A673 (cell line): ENCODE measurements at regions of chr3 and their contacts with region 1.

Region 1: DNA sequence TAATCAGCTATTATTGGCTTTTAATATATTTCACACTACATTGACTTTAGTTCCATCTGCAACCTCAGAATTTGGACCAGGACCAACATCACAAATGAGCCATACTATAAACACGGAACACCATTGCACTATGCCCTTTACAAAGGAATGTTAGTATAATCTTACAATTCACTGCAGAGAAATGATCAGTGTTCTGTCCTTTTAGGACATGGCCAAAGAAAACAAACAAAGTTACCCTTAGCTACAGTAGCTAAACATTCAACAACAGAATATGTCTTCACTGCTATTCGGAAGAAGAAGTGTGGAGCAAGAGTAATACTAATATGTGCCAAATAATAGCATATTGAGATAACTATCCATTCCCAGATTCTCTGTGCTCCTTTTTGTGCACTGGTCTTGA is 90.4 kb downstream of the NAALADL2 start:
- DNase-seq: no peak
- H3K4me3 ChIP-seq: no peak overlapping the region
- H3K27ac ChIP-seq: no peak overlapping the region
- H3K4me1 ChIP-seq: no peaks in the 10 kb centered on the region
- H3K27me3 ChIP-seq: no peaks in the 10 kb centered on the region
- CTCF ChIP-seq: no peak

Region 2: DNA sequence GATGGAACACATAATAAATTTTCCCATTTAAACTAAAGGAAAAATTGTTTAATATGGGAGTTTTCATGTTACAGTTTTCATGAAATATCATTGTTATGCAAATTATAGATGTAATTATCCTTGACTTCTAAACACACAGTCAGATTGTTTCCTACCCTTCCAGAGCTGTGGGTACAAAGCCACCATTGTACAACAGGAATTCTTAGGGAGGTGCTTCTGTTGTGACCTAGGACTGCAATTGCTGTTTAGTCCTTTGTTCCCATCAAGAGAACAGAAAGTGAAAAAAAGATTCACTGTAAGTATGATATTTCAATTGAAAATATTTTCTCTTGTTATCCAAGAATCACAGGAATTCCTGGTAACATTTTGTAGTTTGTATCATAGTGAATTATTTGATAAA is 545.7 kb before region 1 on chr3:
- CTCF ChIA-PET with region 1: interaction called, 10 read pairs
- POLR2A ChIA-PET with region 1: no interaction called
- intact Hi-C with region 1: no loop called
- DNase-seq: no peak
- H3K4me3 ChIP-seq: no peak overlapping the region
- H3K27ac ChIP-seq: no peak overlapping the region
- H3K4me1 ChIP-seq: no peaks in the 10 kb centered on the region
- H3K27me3 ChIP-seq: no peaks in the 10 kb centered on the region
- CTCF ChIP-seq: no peak